ENCODE measurements at regions of chr2 and their contacts with region 1.

Region 1: GRCh38 chr2:216013080-216013909 is at the start of gene MREG:
- DNase-seq: peak; percentile 92
- H3K4me3 Mint-ChIP-seq: peak within 1 kb of the TSS; percentile 85
- H3K27ac Mint-ChIP-seq: peak within 1 kb of the TSS; percentile 62
- H3K4me1 Mint-ChIP-seq: peaks cover 14% of the 10 kb centered on the region
- H3K27me3 Mint-ChIP-seq: no peaks in the 10 kb centered on the region
- CTCF ChIP-seq: peak; percentile 74
- total RNA-seq, gene MREG: 22.0 and 29.7 TPM in 2 replicates

Region 2: DNA sequence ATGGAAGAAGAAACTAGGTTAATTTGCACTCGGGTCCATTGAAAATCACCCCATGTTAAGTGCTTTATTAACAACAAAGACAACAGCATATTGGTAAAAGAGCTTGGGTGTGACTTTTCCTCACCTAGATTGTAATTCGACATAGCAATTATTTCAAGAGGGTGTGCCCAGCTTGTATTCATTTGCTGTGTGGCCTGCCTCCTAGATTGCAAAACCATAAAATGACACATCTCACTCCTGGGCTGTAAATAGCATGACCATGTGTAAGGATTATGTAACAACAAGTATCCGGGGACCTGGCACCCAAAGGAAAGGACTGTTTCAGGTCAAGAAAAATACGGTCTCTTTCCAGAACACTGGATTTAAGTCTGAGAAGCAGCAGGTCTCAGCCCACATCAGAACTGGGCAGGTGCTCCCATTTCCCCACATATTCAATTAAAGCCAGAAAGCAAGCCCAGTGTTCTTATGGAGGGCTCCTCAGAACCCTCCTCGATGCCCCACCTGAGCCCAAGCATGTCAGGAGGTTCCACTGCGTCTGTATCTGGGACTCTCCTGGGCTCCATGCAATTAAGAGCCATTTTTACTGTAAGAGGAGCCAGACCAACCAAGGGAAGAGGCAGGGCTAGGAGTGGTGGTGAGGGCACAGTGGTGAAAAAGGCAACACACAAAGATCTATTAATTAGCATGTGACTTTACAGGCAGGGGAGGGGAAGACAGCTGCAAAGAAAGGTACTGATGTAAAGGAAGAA is 39.2 kb before region 1 on chr2:
- CTCF ChIA-PET with region 1: interaction called, 3 read pairs
- intact Hi-C with region 1: loop called (anchors 5 kb)
- DNase-seq: peak; percentile 44
- H3K4me3 Mint-ChIP-seq: no peak overlapping the region
- H3K27ac Mint-ChIP-seq: no peak overlapping the region
- H3K4me1 Mint-ChIP-seq: peaks cover 38% of the 10 kb centered on the region
- H3K27me3 Mint-ChIP-seq: no peaks in the 10 kb centered on the region
- CTCF ChIP-seq: no peak

Measured in Calu3 (cell line).